Activated naive CD4-positive, alpha-beta T cell treated with anti-CD3 and anti-CD28 coated beads for 36 hours (primary cell): ENCODE measurements at regions of chr5 and their contacts with region 1.

Region 1: DNA sequence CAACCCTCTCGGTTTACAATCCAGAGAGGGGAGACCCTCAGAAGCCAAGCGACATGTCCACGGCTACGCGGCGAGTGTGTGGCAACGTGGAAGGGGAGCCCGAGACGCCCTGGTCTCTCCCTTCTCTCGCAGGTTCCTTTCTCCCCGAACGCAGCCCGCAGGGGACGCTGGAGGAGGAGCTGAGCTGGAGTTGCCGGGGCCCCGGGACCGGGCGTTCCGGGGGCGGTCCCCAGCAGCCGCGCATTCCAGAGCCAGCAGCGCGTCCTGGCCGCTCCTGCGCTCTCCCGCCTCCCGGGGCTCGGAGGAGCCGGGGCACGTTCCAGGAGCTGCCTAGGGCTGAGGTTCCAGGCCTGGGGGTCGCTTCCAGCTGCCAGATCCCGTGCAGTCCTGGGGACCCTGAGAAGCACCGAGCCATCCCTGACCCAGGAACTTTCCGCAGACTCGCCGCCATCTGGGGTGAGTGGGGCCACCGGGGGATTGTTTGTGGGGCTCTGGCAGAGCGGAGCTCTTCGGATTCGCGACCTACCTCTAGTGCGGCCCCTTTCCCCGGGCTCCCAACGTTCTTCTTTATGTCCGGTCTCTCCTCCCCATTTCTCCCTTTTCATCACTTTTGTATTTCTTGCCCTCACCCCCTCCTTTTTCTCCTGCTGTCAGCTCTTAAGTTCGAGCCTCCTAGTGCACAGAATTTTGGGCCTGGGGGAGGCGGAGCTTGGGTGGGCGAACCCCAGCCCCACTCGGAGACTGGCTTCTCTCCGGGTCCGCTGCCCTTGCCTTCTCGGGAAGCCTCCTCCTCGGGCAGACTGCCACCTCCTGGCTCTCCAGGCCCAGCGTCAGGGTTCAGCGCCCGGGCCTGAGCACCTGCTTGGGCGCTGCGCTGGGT is at the start of gene SMIM3:
- DNase-seq: peak; percentile 86
- H3K4me3 Mint-ChIP-seq: peak within 1 kb of the TSS; percentile 99
- H3K27ac Mint-ChIP-seq: peak within 1 kb of the TSS; percentile 93
- H3K4me1 Mint-ChIP-seq: peaks cover 48% of the 10 kb centered on the region
- H3K27me3 Mint-ChIP-seq: no peaks in the 10 kb centered on the region
- total RNA-seq, gene SMIM3: 32.9 to 37.4 TPM

Region 2: GRCh38 chr5:150449517-150450339 is 329.0 kb before region 1 on chr5 and contains the start of gene RPS14:
- CTCF ChIA-PET with region 1: interaction called, 3 read pairs
- intact Hi-C with region 1: loop called (anchors 1 kb)
- DNase-seq: peak; percentile 97
- H3K4me3 Mint-ChIP-seq: peak within 1 kb of the TSS; percentile 93
- H3K27ac Mint-ChIP-seq: peak within 1 kb of the TSS; percentile 99
- H3K4me1 Mint-ChIP-seq: peaks cover 33% of the 10 kb centered on the region
- H3K27me3 Mint-ChIP-seq: no peaks in the 10 kb centered on the region
- total RNA-seq, gene RPS14: 4,594 to 4,738 TPM

Region 3: GRCh38 chr5:150700594-150701293 is 78.0 kb before region 1 on chr5 and contains the start of gene RBM22:
- CTCF ChIA-PET with region 1: interaction called, 63 read pairs
- intact Hi-C with region 1: loop called (anchors 1 kb)
- DNase-seq: peak; percentile 95
- H3K4me3 Mint-ChIP-seq: no peak within 1 kb of the TSS
- H3K27ac Mint-ChIP-seq: no peak within 1 kb of the TSS
- H3K4me1 Mint-ChIP-seq: peaks cover 8% of the 10 kb centered on the region
- H3K27me3 Mint-ChIP-seq: no peaks in the 10 kb centered on the region
- total RNA-seq, gene RBM22: 86.2 to 88.2 TPM

Region 4: DNA sequence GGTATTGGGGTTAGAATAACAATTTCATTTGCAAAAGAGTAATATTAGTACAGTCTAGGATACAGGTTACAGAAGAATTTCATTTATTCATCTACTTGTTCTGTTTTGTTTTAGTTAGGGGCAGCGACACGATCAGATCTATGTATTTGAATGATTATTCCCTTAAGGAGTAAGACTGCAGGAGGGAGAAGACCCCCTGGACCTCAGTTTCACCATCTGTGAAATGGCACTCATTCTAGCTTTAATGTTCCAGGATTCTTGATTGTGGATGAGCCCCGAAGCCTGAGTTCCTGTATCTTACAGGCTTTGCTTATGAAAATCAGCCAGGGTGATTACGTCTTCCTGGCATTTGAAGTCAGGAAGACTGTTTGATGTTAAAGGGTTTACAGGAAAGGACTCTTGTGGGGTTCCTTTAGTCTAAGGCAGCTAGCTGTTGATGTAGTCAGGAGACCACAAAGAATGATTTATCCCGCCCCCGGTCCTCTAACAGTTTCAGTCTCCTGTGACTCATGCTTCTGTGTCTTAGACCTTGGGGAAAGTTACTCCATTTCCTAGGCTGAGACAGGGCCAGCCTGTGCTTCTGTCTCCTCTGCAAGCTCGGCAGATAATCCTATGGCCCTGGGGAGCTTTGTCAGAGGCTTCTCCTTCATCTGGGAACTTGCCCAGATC is 11.3 kb after region 1 on chr5:
- CTCF ChIA-PET with region 1: interaction called, 25 read pairs
- intact Hi-C with region 1: loop called (anchors 1 kb)
- DNase-seq: peak; percentile 92
- H3K4me3 Mint-ChIP-seq: peak overlapping the region; percentile 64
- H3K27ac Mint-ChIP-seq: peak overlapping the region; percentile 97
- H3K4me1 Mint-ChIP-seq: peaks cover 65% of the 10 kb centered on the region
- H3K27me3 Mint-ChIP-seq: no peaks in the 10 kb centered on the region

Region 5: GRCh38 chr5:150946351-150946905 is 167.7 kb after region 1 on chr5:
- CTCF ChIA-PET with region 1: no interaction called
- intact Hi-C with region 1: no loop called
- DNase-seq: peak; percentile 4
- H3K4me3 Mint-ChIP-seq: no peak overlapping the region
- H3K27ac Mint-ChIP-seq: no peak overlapping the region
- H3K4me1 Mint-ChIP-seq: no peaks in the 10 kb centered on the region
- H3K27me3 Mint-ChIP-seq: peaks cover 21% of the 10 kb centered on the region

Region 6: DNA sequence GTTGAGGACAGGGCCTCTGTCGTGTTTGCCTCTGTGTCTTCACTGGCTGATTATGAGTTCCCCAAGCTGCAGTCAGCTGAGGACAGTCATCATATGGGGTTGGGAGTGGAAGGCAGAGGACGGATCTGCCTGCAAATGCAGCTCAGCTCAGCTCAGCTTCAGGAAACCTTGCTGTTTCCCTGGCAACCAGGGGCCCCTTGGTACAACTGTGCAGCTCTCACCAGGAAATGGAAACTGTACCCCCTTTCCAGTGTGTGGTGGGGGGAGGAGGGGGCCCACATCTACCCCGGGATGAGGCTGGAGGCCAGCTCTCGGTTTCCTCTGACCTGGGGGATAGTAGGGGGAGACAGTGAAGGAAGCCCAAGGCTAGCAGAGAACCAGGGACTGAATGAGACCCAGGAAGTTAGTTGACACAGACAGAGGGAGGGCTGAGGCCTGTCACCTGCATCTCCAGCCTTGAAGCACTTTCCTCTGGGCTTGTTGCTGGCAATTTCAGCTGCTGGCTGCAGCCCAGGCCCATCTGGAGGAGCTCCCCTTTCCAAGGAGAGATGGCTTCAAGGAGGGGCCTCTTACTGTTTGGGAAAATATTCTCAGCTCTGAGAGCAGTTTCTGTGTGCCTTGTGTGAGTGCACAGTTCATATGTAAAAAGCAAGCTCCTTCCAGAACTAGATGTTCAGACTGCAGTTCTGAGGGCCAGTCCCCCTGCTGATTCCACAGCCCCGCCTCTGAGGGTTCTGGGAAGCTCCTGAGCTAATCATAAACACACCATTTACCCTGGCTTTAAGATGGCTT is 371.9 kb after region 1 on chr5:
- CTCF ChIA-PET with region 1: no interaction called
- intact Hi-C with region 1: loop called (anchors 2 kb)
- DNase-seq: peak; percentile 91
- H3K4me3 Mint-ChIP-seq: peak overlapping the region; percentile 64
- H3K27ac Mint-ChIP-seq: peak overlapping the region; percentile 90
- H3K4me1 Mint-ChIP-seq: peaks cover 94% of the 10 kb centered on the region
- H3K27me3 Mint-ChIP-seq: no peaks in the 10 kb centered on the region